HepG2 (cell line): ENCODE measurements at regions of chr21 and their contacts with region 1.

Region 1: DNA sequence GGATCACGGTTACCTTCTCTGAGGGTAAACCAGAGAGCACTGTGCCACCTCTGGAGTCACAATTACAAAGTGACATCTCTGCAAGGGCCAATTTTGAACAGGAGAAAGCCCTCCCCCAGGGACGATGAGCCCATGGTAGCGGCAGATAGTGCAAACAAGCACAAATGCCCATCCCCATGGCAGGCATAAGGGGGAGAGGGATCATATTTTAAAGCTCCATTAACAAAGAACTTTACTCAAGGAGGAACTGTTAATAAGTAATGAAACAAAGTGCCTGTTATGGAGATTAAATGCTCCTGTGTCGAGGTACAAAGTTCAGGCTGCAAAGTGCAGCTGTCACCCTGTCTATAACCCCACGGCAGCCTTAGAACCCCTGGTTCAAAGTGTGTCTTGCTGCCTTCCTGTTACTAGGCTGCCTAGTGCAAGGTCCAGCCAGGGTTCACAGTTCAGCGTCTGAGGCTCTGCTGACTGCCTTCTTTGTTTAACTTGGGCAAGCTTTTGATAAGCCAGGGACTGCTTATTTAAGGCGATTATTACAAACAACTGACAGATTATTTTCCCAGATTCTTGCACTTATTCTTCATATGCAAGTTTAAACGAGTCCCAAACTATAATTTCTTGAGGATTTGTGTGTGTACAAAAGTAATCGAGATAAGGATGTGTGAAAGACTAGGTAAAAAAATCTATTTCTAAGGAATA is 75.7 kb upstream of the NRIP1 start:
- DNase-seq: peak; percentile 99
- ATAC-seq: peak; percentile 96
- H3K4me3 ChIP-seq: peak overlapping the region in 2 of 3 experiments; percentile 7 to 26; a peak in 3 of 6 replicates
- H3K27ac ChIP-seq: peak overlapping the region; percentile 90
- H3K4me1 ChIP-seq: peaks cover 50% of the 10 kb centered on the region
- H3K27me3 ChIP-seq: no peaks in the 10 kb centered on the region
- CTCF ChIP-seq: no peak; the same call in 1 of the 2 replicates
- EP300 ChIP-seq: peak; percentile 94 to 99
- POLR2A ChIP-seq: peak; percentile 42 to 61; a peak in 1 of 4 replicates
- RAD21 ChIP-seq: peak; percentile 61

Region 2: GRCh38 chr21:14877570-14878228 is 262.8 kb before region 1 on chr21:
- CTCF ChIA-PET with region 1: no interaction called
- POLR2A ChIA-PET with region 1: interaction called, 6 read pairs
- in situ Hi-C with region 1: no loop called
- intact Hi-C with region 1: loop called (anchors 1 kb)
- DNase-seq: peak; percentile 96
- ATAC-seq: peak; percentile 70
- H3K4me3 ChIP-seq: peak overlapping the region in 1 of 3 experiments; percentile 15; a peak in 1 of 6 replicates
- H3K27ac ChIP-seq: peak overlapping the region; percentile 96
- H3K4me1 ChIP-seq: peaks cover 77% of the 10 kb centered on the region
- H3K27me3 ChIP-seq: no peaks in the 10 kb centered on the region
- CTCF ChIP-seq: no peak
- EP300 ChIP-seq: peak; percentile 54 to 96
- POLR2A ChIP-seq: no peak
- RAD21 ChIP-seq: no peak

Region 3: DNA sequence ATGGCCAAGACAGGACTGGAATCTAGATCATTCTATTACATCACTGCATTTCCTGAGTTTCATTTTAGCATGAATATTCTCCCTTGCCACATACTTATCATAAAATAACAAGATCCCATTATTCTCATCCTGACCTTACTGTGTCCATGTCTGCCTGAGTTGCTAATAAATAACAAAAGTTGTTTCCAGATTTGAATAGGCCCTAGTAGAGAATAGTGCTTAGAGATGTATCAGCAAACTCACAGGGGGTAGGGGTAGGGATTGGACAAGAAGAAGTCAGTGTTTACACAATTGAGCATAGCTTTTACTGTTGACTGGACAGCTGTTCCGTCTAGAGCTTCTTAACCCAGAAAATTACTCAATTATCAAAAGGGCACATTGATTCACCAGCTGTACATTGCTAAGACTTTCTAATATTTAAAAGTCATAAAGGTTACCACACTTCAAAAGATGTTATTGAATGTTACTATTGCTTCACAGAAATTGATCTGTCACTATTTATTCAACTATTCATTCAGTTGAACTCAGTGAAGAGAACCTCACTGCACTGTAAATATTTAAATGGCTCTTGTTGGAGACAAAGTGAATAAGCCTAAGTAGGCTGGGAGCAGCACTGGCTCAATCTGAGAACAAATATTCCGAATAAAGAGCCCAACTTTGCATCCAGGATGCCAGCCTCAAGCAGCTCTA is 197.5 kb before region 1 on chr21:
- CTCF ChIA-PET with region 1: no interaction called
- POLR2A ChIA-PET with region 1: no interaction called
- in situ Hi-C with region 1: no loop called
- intact Hi-C with region 1: loop called (anchors 5 kb)
- DNase-seq: peak; percentile 91
- ATAC-seq: peak; percentile 96
- H3K4me3 ChIP-seq: no peak overlapping the region; a peak in 1 of 6 replicates
- H3K27ac ChIP-seq: peak overlapping the region; percentile 71
- H3K4me1 ChIP-seq: peaks cover 55% of the 10 kb centered on the region
- H3K27me3 ChIP-seq: no peaks in the 10 kb centered on the region
- CTCF ChIP-seq: no peak
- EP300 ChIP-seq: peak; percentile 62 to 97
- POLR2A ChIP-seq: no peak
- RAD21 ChIP-seq: no peak

Region 4: GRCh38 chr21:15108801-15109200 is 31.7 kb before region 1 on chr21:
- CTCF ChIA-PET with region 1: no interaction called
- POLR2A ChIA-PET with region 1: no interaction called
- in situ Hi-C with region 1: no loop called
- intact Hi-C with region 1: no loop called
- DNase-seq: no peak
- ATAC-seq: no peak
- H3K4me3 ChIP-seq: no peak overlapping the region
- H3K27ac ChIP-seq: no peak overlapping the region
- H3K4me1 ChIP-seq: no peaks in the 10 kb centered on the region
- H3K27me3 ChIP-seq: no peaks in the 10 kb centered on the region; a peak in 1 of 5 replicates
- CTCF ChIP-seq: no peak
- EP300 ChIP-seq: no peak
- POLR2A ChIP-seq: no peak
- RAD21 ChIP-seq: no peak

Region 5: GRCh38 chr21:15121655-15122120 is 18.8 kb before region 1 on chr21:
- CTCF ChIA-PET with region 1: no interaction called
- POLR2A ChIA-PET with region 1: interaction called, 51 read pairs
- in situ Hi-C with region 1: no loop called
- intact Hi-C with region 1: no loop called
- DNase-seq: peak; percentile 79
- ATAC-seq: peak; percentile 97
- H3K4me3 ChIP-seq: peak overlapping the region; percentile 7 to 41 (median 35); a peak in 5 of 6 replicates
- H3K27ac ChIP-seq: peak overlapping the region; percentile 68
- H3K4me1 ChIP-seq: peaks cover 26% of the 10 kb centered on the region
- H3K27me3 ChIP-seq: no peaks in the 10 kb centered on the region
- CTCF ChIP-seq: no peak
- EP300 ChIP-seq: peak in 1 of 2 experiments; percentile 86; a peak in 2 of 4 replicates
- POLR2A ChIP-seq: no peak
- RAD21 ChIP-seq: no peak

Region 6: GRCh38 chr21:15183813-15184257 is 43.4 kb after region 1 on chr21:
- CTCF ChIA-PET with region 1: no interaction called
- POLR2A ChIA-PET with region 1: no interaction called
- in situ Hi-C with region 1: no loop called
- intact Hi-C with region 1: no loop called
- DNase-seq: no peak
- ATAC-seq: no peak
- H3K4me3 ChIP-seq: no peak overlapping the region
- H3K27ac ChIP-seq: no peak overlapping the region
- H3K4me1 ChIP-seq: no peaks in the 10 kb centered on the region
- H3K27me3 ChIP-seq: no peaks in the 10 kb centered on the region
- CTCF ChIP-seq: no peak
- EP300 ChIP-seq: no peak
- POLR2A ChIP-seq: no peak
- RAD21 ChIP-seq: no peak

Region 7: GRCh38 chr21:15210235-15210739 is 69.8 kb after region 1 on chr21:
- CTCF ChIA-PET with region 1: no interaction called
- POLR2A ChIA-PET with region 1: interaction called, 9 read pairs
- in situ Hi-C with region 1: loop called (anchors 5 kb)
- intact Hi-C with region 1: loop called (anchors 1 kb)
- DNase-seq: peak; percentile 92
- ATAC-seq: peak; percentile 95
- H3K4me3 ChIP-seq: peak overlapping the region in 2 of 3 experiments; percentile 35 to 46; a peak in 3 of 6 replicates
- H3K27ac ChIP-seq: peak overlapping the region; percentile 91
- H3K4me1 ChIP-seq: peaks cover 78% of the 10 kb centered on the region
- H3K27me3 ChIP-seq: no peaks in the 10 kb centered on the region
- CTCF ChIP-seq: peak; percentile 78
- EP300 ChIP-seq: peak; percentile 54 to 94; a peak in 3 of 4 replicates
- POLR2A ChIP-seq: peak; percentile 34 to 38; a peak in 2 of 4 replicates
- RAD21 ChIP-seq: peak; percentile 56; the same call in 1 of the 2 replicates

Region 8: GRCh38 chr21:15483138-15483780 is 342.8 kb after region 1 on chr21:
- CTCF ChIA-PET with region 1: no interaction called
- POLR2A ChIA-PET with region 1: no interaction called
- in situ Hi-C with region 1: no loop called
- intact Hi-C with region 1: loop called (anchors 1 kb)
- DNase-seq: peak; percentile 82
- ATAC-seq: peak; percentile 100
- H3K4me3 ChIP-seq: no peak overlapping the region
- H3K27ac ChIP-seq: no peak overlapping the region
- H3K4me1 ChIP-seq: peaks cover 25% of the 10 kb centered on the region
- H3K27me3 ChIP-seq: no peaks in the 10 kb centered on the region
- CTCF ChIP-seq: peak; percentile 97
- EP300 ChIP-seq: no peak
- POLR2A ChIP-seq: no peak
- RAD21 ChIP-seq: peak; percentile 96